ENCODE measurements at regions of chr21 and their contacts with region 1.

Region 1: GRCh38 chr21:14560555-14560954 is 14.4 kb upstream of the SAMSN1 start:
- DNase-seq: no peak
- ATAC-seq: no peak
- H3K4me3 ChIP-seq: no peak overlapping the region
- H3K4me3 Mint-ChIP-seq: no peak overlapping the region
- H3K27ac ChIP-seq: no peak overlapping the region
- H3K27ac Mint-ChIP-seq: no peak overlapping the region
- H3K4me1 ChIP-seq: no peaks in the 10 kb centered on the region
- H3K4me1 Mint-ChIP-seq: peaks cover 7% of the 10 kb centered on the region
- H3K27me3 ChIP-seq: no peaks in the 10 kb centered on the region
- H3K27me3 Mint-ChIP-seq: no peaks in the 10 kb centered on the region
- CTCF ChIP-seq: no peak

Region 2: GRCh38 chr21:14523234-14523633 is 37.3 kb before region 1 on chr21:
- CTCF ChIA-PET with region 1: interaction called, 4 read pairs
- POLR2A ChIA-PET with region 1: no interaction called
- intact Hi-C with region 1: loop called in 1 of 2 experiments (anchors 5 kb)
- DNase-seq: peak in 3 of 9 experiments; percentile 12 to 63 (median 56)
- ATAC-seq: peak; percentile 49
- H3K4me3 ChIP-seq: peak overlapping the region in 1 of 2 experiments; percentile 18
- H3K4me3 Mint-ChIP-seq: peak overlapping the region; percentile 67
- H3K27ac ChIP-seq: peak overlapping the region in 1 of 2 experiments; percentile 21
- H3K27ac Mint-ChIP-seq: peak overlapping the region; percentile 4
- H3K4me1 ChIP-seq: peaks cover 10% of the 10 kb centered on the region
- H3K4me1 Mint-ChIP-seq: peaks cover 58% of the 10 kb centered on the region
- H3K27me3 ChIP-seq: no peaks in the 10 kb centered on the region
- H3K27me3 Mint-ChIP-seq: no peaks in the 10 kb centered on the region
- CTCF ChIP-seq: no peak

Measured in CD8-positive, alpha-beta T cell (primary cell).